ENCODE measurements at regions of chr10 and their contacts with region 1.

Region 1: DNA sequence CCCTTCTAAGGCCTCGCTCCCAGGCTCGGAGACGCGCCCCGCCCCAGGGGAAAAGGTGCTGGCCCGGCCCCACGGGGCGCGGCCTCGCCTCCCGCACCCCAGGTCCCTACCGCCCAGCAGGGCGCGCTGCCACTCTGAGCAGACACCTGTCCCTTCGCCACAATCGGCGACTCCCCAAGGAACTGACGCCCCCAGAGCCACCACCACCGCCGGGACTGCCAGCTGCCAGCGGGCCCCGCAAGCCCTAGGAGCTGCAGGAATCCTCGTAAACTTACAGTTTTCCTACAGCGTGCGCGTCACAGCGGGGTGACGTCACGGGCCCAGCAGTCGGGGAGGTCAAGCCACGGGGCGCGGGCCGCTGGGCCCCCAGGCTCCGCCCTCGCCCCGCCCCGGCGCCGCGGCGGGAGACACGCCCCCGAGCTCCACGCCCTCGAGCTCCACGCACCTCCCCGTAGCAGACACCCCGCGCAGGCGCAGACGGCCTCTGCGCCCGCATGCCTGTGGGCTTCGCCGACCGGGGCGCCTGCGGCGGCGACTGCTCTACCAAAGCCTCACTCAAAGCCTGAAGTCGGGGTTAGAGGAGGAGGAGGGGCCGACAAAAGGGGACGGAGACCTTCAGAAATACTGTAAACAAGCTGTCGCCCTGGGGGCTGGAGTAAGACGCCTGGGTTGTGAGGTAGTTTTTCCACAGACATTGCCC is at the start of gene ZNF438:
- DNase-seq: peak; percentile 90 to 95
- ATAC-seq: peak; percentile 75 to 79
- H3K4me3 ChIP-seq: peak within 1 kb of the TSS; percentile 72 to 87 (median 75)
- H3K27ac ChIP-seq: peak within 1 kb of the TSS; percentile 99 to 100 (median 100)
- H3K4me1 ChIP-seq: peaks cover 28 to 61% of the 10 kb centered on the region in 2 donors
- H3K27me3 ChIP-seq: no peaks in the 10 kb centered on the region
- CTCF ChIP-seq: peak; percentile 67 to 76 (median 72)
- POLR2A ChIP-seq: peak; percentile 95
- total RNA-seq, gene ZNF438: 14.4 to 37.0 (median 26.5) TPM

Region 2: GRCh38 chr10:30857803-30858202 is 173.9 kb before region 1 on chr10:
- in situ Hi-C with region 1: no loop called
- intact Hi-C with region 1: loop called (anchors 5 kb)
- DNase-seq: peak; percentile 83 to 87
- ATAC-seq: peak; percentile 93 to 94
- H3K4me3 ChIP-seq: no peak overlapping the region
- H3K27ac ChIP-seq: peak overlapping the region; percentile 68 to 78 (median 70)
- H3K4me1 ChIP-seq: peaks cover 40 to 53% of the 10 kb centered on the region in 2 donors
- H3K27me3 ChIP-seq: no peaks in the 10 kb centered on the region
- CTCF ChIP-seq: no peak
- POLR2A ChIP-seq: no peak

Region 3: GRCh38 chr10:30980951-30981616 is 50.6 kb before region 1 on chr10:
- in situ Hi-C with region 1: no loop called
- intact Hi-C with region 1: loop called (anchors 2 kb)
- DNase-seq: peak; percentile 95
- ATAC-seq: peak; percentile 94 to 95
- H3K4me3 ChIP-seq: no peak overlapping the region
- H3K27ac ChIP-seq: peak overlapping the region; percentile 82 to 91 (median 84)
- H3K4me1 ChIP-seq: peaks cover 37 to 55% of the 10 kb centered on the region in 2 donors
- H3K27me3 ChIP-seq: no peaks in the 10 kb centered on the region
- CTCF ChIP-seq: no peak
- POLR2A ChIP-seq: peak; percentile 45 to 62

Region 4: GRCh38 chr10:31318854-31319601 is 287.3 kb after region 1 on chr10 and contains the start of gene ZEB1:
- in situ Hi-C with region 1: loop called in 1 of 4 experiments (anchors 25 kb)
- intact Hi-C with region 1: loop called (anchors 2 kb)
- DNase-seq: peak; percentile 89 to 92
- ATAC-seq: peak; percentile 56 to 75
- H3K4me3 ChIP-seq: peak within 1 kb of the TSS; percentile 91 to 96 (median 94)
- H3K27ac ChIP-seq: peak within 1 kb of the TSS; percentile 97 to 99 (median 98)
- H3K4me1 ChIP-seq: peaks cover 29 to 50% of the 10 kb centered on the region in 2 donors
- H3K27me3 ChIP-seq: no peaks in the 10 kb centered on the region
- CTCF ChIP-seq: peak; percentile 56 to 74 (median 66)
- POLR2A ChIP-seq: peak; percentile 61 to 77
- total RNA-seq, gene ZEB1: 67.4 to 175 (median 137) TPM

Region 5: GRCh38 chr10:31759799-31760626 is 728.3 kb after region 1 on chr10:
- in situ Hi-C with region 1: no loop called
- intact Hi-C with region 1: loop called (anchors 5 kb)
- DNase-seq: peak; percentile 95
- ATAC-seq: peak; percentile 88 to 92
- H3K4me3 ChIP-seq: peak overlapping the region; percentile 67 to 89 (median 83)
- H3K27ac ChIP-seq: peak overlapping the region; percentile 95 to 97 (median 96)
- H3K4me1 ChIP-seq: peaks cover 16 to 33% of the 10 kb centered on the region in 2 donors
- H3K27me3 ChIP-seq: no peaks in the 10 kb centered on the region
- CTCF ChIP-seq: no peak
- POLR2A ChIP-seq: peak; percentile 88 to 93

Measured in gastrocnemius medialis (tissue), 4 donors.